ENCODE measurements at regions of chr19 and their contacts with region 1.

Region 1: GRCh38 chr19:10565567-10566407 is at the start of gene KRI1:
- DNase-seq: peak; percentile 97 to 100 (median 99)
- ATAC-seq: peak; percentile 75
- H3K4me3 ChIP-seq: peak within 1 kb of the TSS; percentile 84
- H3K4me3 Mint-ChIP-seq: peak within 1 kb of the TSS; percentile 92 to 100 (median 97)
- H3K27ac ChIP-seq: peak within 1 kb of the TSS; percentile 92
- H3K27ac Mint-ChIP-seq: peak within 1 kb of the TSS; percentile 94 to 99 (median 96)
- H3K4me1 ChIP-seq: peaks cover 26 to 28% of the 10 kb centered on the region in 2 donors
- H3K4me1 Mint-ChIP-seq: peaks cover 28 to 56% (median 45%) of the 10 kb centered on the region in 7 donors
- H3K27me3 ChIP-seq: no peaks in the 10 kb centered on the region
- H3K27me3 Mint-ChIP-seq: peaks cover 0 to 5% (median 0%) of the 10 kb centered on the region in 5 donors
- total RNA-seq, gene KRI1: 48.4 to 84.1 (median 60.4) TPM

Region 2: GRCh38 chr19:10106100-10106936 is 459.5 kb before region 1 on chr19 and contains the start of gene PPAN:
- CTCF ChIA-PET with region 1: no interaction called
- POLR2A ChIA-PET with region 1: no interaction called
- intact Hi-C with region 1: loop called in 1 of 2 experiments (anchors 10 kb)
- DNase-seq: peak; percentile 88 to 98 (median 97)
- ATAC-seq: peak; percentile 86
- H3K4me3 ChIP-seq: peak within 1 kb of the TSS; percentile 60
- H3K4me3 Mint-ChIP-seq: peak within 1 kb of the TSS; percentile 75 to 91 (median 88)
- H3K27ac ChIP-seq: peak within 1 kb of the TSS; percentile 86
- H3K27ac Mint-ChIP-seq: peak within 1 kb of the TSS; percentile 92 to 98 (median 97)
- H3K4me1 ChIP-seq: peaks cover 53 to 65% of the 10 kb centered on the region in 2 donors
- H3K4me1 Mint-ChIP-seq: peaks cover 32 to 61% (median 56%) of the 10 kb centered on the region in 7 donors
- H3K27me3 ChIP-seq: no peaks in the 10 kb centered on the region
- H3K27me3 Mint-ChIP-seq: no peaks in the 10 kb centered on the region
- total RNA-seq, gene PPAN: 87.6 to 122 (median 109) TPM

Region 3: DNA sequence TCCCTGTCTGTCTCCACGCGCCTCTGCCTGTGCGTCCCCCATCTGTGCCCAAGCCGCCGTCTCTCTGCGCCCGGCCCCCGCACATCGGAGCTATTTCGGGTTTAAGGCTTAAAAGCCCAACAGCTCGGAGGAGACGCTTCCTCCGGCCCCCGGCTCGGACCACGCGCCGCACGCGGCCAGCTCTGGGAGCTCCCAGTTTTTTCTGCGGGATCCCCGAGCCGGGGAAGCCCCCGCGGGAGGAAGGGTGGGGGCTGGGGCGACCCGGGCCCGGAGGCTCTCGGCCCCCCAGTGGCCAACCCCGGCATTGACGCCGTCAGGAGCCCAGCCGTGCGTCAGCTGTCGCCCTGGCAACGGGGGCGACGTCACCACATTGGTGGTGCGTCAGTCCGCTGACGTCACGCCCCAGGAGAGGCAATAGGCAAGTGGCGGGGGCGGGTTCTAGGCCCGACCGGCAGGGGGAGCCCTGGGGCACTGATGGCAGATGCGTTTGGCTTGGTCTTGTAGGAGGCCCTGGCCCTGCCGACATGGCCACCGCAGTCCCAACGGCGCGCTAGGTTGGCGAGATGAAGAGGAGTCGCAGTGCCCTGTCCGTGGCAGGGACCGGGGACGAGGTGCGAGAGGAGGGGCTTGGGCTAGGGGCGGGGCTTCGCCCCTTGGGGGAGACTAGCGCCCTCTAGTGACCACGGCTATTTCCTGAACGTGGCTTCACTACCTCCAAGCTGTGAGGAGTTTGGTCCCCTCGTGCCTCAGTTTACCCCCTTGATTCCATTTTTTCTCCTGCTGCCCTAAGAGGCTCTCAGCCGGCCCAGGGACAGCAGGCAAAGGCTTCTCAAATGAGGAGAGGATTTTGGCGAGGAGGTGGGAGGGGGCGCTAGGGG is 149.2 kb before region 1 on chr19:
- CTCF ChIA-PET with region 1: no interaction called
- POLR2A ChIA-PET with region 1: no interaction called
- intact Hi-C with region 1: loop called in 1 of 2 experiments (anchors 2 kb)
- DNase-seq: peak; percentile 93 to 99 (median 97)
- ATAC-seq: peak; percentile 91
- H3K4me3 ChIP-seq: peak overlapping the region; percentile 43
- H3K4me3 Mint-ChIP-seq: peak overlapping the region; percentile 63 to 92 (median 77)
- H3K27ac ChIP-seq: peak overlapping the region; percentile 55
- H3K27ac Mint-ChIP-seq: peak overlapping the region; percentile 75 to 98 (median 97)
- H3K4me1 ChIP-seq: peaks cover 41 to 53% of the 10 kb centered on the region in 2 donors
- H3K4me1 Mint-ChIP-seq: peaks cover 20 to 59% (median 43%) of the 10 kb centered on the region in 7 donors
- H3K27me3 ChIP-seq: peaks cover 18 to 29% of the 10 kb centered on the region in 2 donors
- H3K27me3 Mint-ChIP-seq: peaks cover 25 to 33% (median 26%) of the 10 kb centered on the region in 5 donors

Region 4: GRCh38 chr19:10602330-10603083 is 36.7 kb after region 1 on chr19:
- CTCF ChIA-PET with region 1: interaction called, 3 read pairs
- POLR2A ChIA-PET with region 1: interaction called, 26 read pairs
- intact Hi-C with region 1: loop called (anchors 1 kb)
- DNase-seq: peak; percentile 73 to 89 (median 86)
- ATAC-seq: peak; percentile 93
- H3K4me3 ChIP-seq: peak overlapping the region; percentile 92
- H3K4me3 Mint-ChIP-seq: peak overlapping the region; percentile 97 to 100 (median 99)
- H3K27ac ChIP-seq: peak overlapping the region; percentile 100
- H3K27ac Mint-ChIP-seq: peak overlapping the region; percentile 94 to 100 (median 100)
- H3K4me1 ChIP-seq: peaks cover 15 to 20% of the 10 kb centered on the region in 2 donors
- H3K4me1 Mint-ChIP-seq: peaks cover 18 to 37% (median 31%) of the 10 kb centered on the region in 7 donors
- H3K27me3 ChIP-seq: no peaks in the 10 kb centered on the region
- H3K27me3 Mint-ChIP-seq: peaks cover 0 to 12% (median 0%) of the 10 kb centered on the region in 5 donors

Region 5: GRCh38 chr19:10760273-10760944 is 194.6 kb after region 1 on chr19:
- CTCF ChIA-PET with region 1: interaction called, 3 read pairs
- POLR2A ChIA-PET with region 1: interaction called, 4 read pairs
- intact Hi-C with region 1: loop called (anchors 1 to 5 kb)
- DNase-seq: peak in 1 of 9 donors; percentile 57
- ATAC-seq: no peak
- H3K4me3 ChIP-seq: no peak overlapping the region
- H3K4me3 Mint-ChIP-seq: peak overlapping the region; percentile 60 to 86 (median 82)
- H3K27ac ChIP-seq: peak overlapping the region; percentile 70
- H3K27ac Mint-ChIP-seq: peak overlapping the region; percentile 83 to 99 (median 94)
- H3K4me1 ChIP-seq: peaks cover 62 to 79% of the 10 kb centered on the region in 2 donors
- H3K4me1 Mint-ChIP-seq: peaks cover 69 to 92% (median 84%) of the 10 kb centered on the region in 7 donors
- H3K27me3 ChIP-seq: no peaks in the 10 kb centered on the region
- H3K27me3 Mint-ChIP-seq: peaks cover 0 to 2% (median 0%) of the 10 kb centered on the region in 5 donors

Region 6: DNA sequence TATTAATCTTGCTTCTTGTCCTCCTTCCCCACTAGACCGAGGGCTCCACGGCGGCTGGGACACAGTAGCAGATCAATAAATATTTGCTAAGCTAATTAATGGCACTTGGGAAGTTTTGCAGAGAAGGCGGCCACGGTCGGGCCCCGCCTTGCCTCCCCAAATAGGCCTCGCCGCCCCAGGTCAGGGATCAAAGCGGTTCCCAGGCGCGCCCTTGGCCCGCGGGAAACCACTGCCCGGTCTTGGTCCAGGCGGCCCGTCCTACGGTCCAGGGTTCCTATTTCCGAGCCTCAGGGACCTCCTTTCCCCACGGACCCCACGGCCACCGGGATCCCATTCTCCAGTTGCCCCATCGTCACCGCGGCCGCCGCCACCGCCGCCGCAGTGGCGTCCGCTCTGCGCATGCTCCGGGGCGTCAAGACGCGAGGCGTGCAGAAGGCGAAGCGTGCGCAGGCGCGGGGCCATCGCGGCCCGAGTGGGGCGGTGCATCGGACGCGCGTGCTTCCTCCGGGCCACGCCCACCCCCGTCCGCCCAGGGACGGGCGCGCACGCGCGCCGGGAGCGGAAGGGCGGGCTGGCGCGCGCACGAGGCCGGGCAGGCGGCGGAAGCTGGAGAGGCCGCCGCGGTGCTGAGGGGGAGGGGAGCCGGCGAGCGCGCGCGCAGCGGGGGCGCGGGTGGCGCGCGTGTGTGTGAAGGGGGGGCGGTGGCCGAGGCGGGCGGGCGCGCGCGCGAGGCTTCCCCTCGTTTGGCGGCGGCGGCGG is 394.7 kb after region 1 on chr19 and contains the start of gene SMARCA4:
- CTCF ChIA-PET with region 1: no interaction called
- POLR2A ChIA-PET with region 1: no interaction called
- intact Hi-C with region 1: loop called in 1 of 2 experiments (anchors 5 kb)
- DNase-seq: peak; percentile 96 to 100 (median 99)
- ATAC-seq: peak; percentile 96
- H3K4me3 ChIP-seq: peak within 1 kb of the TSS; percentile 89
- H3K4me3 Mint-ChIP-seq: peak within 1 kb of the TSS; percentile 84 to 94 (median 90)
- H3K27ac ChIP-seq: peak within 1 kb of the TSS; percentile 89
- H3K27ac Mint-ChIP-seq: peak within 1 kb of the TSS; percentile 79 to 94 (median 93)
- H3K4me1 ChIP-seq: peaks cover 28 to 33% of the 10 kb centered on the region in 2 donors
- H3K4me1 Mint-ChIP-seq: peaks cover 22 to 42% (median 34%) of the 10 kb centered on the region in 7 donors
- H3K27me3 ChIP-seq: no peaks in the 10 kb centered on the region
- H3K27me3 Mint-ChIP-seq: no peaks in the 10 kb centered on the region
- total RNA-seq, gene SMARCA4: 96.0 to 126 (median 104) TPM

Region 7: GRCh38 chr19:11577451-11578257 is 1011.9 kb after region 1 on chr19 and contains the start of gene ACP5:
- CTCF ChIA-PET with region 1: no interaction called
- POLR2A ChIA-PET with region 1: no interaction called
- intact Hi-C with region 1: no loop called
- DNase-seq: peak in 5 of 9 donors; percentile 16 to 41 (median 29)
- ATAC-seq: no peak
- H3K4me3 ChIP-seq: peak within 1 kb of the TSS; percentile 65
- H3K4me3 Mint-ChIP-seq: peak within 1 kb of the TSS; percentile 72 to 89 (median 84)
- H3K27ac ChIP-seq: peak within 1 kb of the TSS; percentile 75
- H3K27ac Mint-ChIP-seq: peak within 1 kb of the TSS; percentile 33 to 93 (median 85)
- H3K4me1 ChIP-seq: peaks cover 9 to 36% of the 10 kb centered on the region in 2 donors
- H3K4me1 Mint-ChIP-seq: peaks cover 16 to 47% (median 32%) of the 10 kb centered on the region in 7 donors
- H3K27me3 ChIP-seq: no peaks in the 10 kb centered on the region
- H3K27me3 Mint-ChIP-seq: no peaks in the 10 kb centered on the region
- total RNA-seq, gene ACP5: 17.4 to 29.6 (median 23.9) TPM